ENCODE measurements at regions of chr1 and their contacts with region 1.

Region 1: DNA sequence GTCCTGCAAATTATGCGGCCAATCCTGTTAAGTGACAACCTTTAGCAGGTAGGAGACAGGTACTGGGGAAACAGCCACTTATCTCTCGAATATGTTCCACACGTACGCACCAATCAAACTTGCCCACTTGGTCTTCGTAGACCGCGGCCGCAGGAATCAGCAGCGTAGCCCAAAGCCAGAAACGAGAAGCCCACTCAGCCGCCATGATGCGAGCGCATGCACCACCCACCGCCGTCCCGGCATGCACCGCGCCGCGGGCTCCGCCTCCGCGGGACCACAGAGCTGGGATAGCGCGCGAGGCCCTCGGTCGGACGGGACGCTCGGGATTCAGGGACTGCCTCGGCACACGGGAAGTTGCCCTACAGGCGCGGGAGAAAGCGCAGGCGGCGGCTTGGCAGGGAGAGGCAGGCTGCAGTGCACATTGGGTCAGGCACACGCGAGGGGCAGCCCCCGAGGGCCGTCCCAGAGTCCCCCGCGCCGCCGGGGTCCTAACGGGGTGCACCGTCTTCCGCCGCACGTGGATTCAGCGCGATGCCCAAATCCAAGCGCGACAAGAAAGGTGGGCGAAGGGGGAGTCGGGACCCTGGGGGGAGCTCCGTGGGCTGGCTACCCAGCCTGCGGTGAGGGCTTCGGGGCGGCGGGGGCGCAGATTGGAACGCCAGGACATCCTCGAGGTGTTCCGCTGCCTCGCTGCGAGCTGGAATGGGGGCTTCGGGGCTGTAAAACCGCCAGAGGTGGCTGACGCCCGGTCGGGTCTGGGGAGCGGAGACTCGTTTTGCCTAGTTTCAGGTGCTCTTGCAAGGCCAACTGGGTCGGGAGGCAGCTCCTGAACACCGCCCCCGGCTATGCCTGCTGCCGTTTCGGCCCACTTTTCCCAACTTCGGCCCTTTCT is at the starts of genes EMC1 and MRTO4:
- DNase-seq: peak; percentile 79 to 93 (median 82)
- ATAC-seq: peak; percentile 94
- H3K4me3 ChIP-seq: peak within 1 kb of the TSS; percentile 87 to 95
- H3K27ac ChIP-seq: peak within 1 kb of the TSS; percentile 91 to 98 (median 94)
- H3K4me1 ChIP-seq: peaks cover 26% of the 10 kb centered on the region
- H3K27me3 ChIP-seq: no peaks in the 10 kb centered on the region
- CTCF ChIP-seq: peak in 1 of 7 experiments; percentile 21
- POLR2A ChIP-seq: peak; percentile 31 to 65 (median 64)
- total RNA-seq, gene EMC1: 15.3 to 23.7 TPM
- total RNA-seq, gene MRTO4: 17.6 to 27.7 TPM

Region 2: GRCh38 chr1:19015476-19015875 is 236.1 kb before region 1 on chr1:
- intact Hi-C with region 1: no loop called
- DNase-seq: no peak
- ATAC-seq: no peak
- H3K4me3 ChIP-seq: no peak overlapping the region
- H3K27ac ChIP-seq: no peak overlapping the region
- H3K4me1 ChIP-seq: peaks cover 34% of the 10 kb centered on the region
- H3K27me3 ChIP-seq: no peaks in the 10 kb centered on the region
- CTCF ChIP-seq: no peak
- POLR2A ChIP-seq: no peak

Region 3: GRCh38 chr1:19309123-19309813 is 57.7 kb after region 1 on chr1:
- intact Hi-C with region 1: loop called (anchors 10 kb)
- DNase-seq: no peak
- ATAC-seq: no peak
- H3K4me3 ChIP-seq: no peak overlapping the region
- H3K27ac ChIP-seq: no peak overlapping the region
- H3K4me1 ChIP-seq: peaks cover 37% of the 10 kb centered on the region
- H3K27me3 ChIP-seq: no peaks in the 10 kb centered on the region
- CTCF ChIP-seq: no peak
- POLR2A ChIP-seq: no peak

Region 4: DNA sequence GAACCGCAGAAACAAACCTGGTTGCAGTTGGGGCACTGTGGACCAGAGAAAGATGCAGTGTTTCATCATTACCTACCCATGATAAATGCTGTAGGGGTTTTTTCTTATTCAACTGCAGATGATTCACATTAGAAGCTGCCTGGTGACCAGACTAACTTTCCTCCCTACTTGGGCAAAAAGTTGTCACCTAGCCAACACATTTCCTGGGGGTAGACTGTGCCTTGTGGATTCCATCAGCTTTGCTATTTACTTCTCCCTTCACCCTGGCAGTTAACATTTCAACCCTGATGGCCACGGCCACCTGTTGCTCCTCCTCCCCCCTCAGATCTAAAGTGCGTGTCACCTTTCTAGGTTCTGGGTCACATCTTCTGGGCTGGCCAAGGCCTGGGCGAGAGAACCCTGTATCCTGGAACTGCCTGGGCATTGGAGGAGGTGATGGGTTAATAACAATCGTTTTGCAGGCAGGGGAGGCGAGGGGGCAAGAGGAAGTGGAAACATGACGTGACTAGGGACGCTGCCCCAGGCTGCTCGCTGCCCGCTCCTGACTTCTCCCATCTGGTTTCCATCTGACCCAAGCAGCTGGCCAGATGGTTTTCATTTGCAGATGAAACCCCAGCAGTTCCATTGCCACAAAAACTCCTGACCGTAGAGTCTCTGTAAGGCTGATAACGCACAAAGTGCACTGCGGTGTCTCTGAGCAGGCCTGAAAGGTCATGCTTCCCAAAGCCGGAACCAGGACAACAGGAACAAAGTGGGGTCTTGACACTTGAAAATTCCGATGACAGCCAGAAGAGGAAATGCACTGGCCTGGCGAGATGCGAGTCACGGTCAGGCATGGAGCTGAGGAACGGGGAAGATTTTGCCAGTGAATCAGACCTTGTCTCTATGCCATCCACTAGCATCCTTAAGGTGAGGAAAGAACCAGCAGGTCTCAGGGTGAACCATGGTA is 197.2 kb after region 1 on chr1:
- intact Hi-C with region 1: no loop called
- DNase-seq: peak in 3 of 4 donors; percentile 38 to 74 (median 39)
- ATAC-seq: no peak
- H3K4me3 ChIP-seq: no peak overlapping the region
- H3K27ac ChIP-seq: peak overlapping the region in 2 of 4 donors; percentile 48 to 64
- H3K4me1 ChIP-seq: peaks cover 28% of the 10 kb centered on the region
- H3K27me3 ChIP-seq: no peaks in the 10 kb centered on the region
- CTCF ChIP-seq: no peak
- POLR2A ChIP-seq: peak in 1 of 3 donors; percentile 18